CD8-positive, alpha-beta T cell (primary cell): ENCODE measurements at regions of chr10 and their contacts with region 1.

Region 1: DNA sequence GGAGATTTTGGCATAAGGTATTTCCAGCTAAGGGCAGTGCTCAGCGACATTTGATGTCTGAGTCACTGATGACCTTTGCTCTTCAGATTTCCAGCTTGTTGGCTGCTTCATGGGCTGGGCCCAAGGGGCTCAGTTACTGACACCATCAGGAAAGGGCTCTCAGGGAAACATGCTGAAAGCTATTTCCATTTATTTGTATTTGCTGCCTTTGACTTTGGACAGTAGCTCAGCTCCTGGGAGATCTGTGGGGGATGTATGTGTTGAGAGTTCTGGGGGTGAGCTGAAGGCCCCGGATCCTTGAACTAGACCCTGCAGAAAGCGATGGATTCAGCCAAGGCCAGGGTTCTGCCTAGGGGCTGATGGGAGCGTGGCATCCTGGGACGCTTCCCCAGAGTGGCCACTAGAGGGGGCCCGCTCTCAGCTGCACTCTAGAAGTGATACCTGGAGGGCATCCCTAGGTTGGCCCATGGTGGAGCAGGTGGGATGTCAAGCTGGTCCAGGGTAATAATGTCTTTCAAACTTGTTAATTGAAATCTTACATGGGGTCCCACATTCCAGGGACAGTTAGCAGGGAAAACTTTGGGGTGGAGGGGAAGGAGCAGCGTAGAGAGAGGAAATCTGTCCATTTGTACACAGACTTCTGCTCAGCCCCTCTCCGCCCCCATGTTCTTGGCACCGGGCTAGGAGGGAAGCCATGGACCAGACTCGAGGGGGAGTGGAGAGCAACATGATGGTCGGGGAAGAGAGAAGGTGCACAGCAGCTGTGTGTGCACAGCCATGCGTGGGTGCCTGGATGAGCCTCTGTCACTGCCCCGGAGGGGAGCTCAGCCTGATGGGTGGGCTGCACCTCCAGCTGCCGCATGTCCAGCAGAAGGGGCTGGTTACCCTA is 3.0 kb upstream of the BTBD16 start:
- DNase-seq: peak; percentile 10 to 63 (median 40)
- ATAC-seq: peak; percentile 61
- H3K4me3 ChIP-seq: no peak overlapping the region
- H3K4me3 Mint-ChIP-seq: no peak overlapping the region
- H3K27ac ChIP-seq: no peak overlapping the region
- H3K27ac Mint-ChIP-seq: no peak overlapping the region
- H3K4me1 ChIP-seq: no peaks in the 10 kb centered on the region
- H3K4me1 Mint-ChIP-seq: no peaks in the 10 kb centered on the region
- H3K27me3 ChIP-seq: peaks cover 0 to 2% of the 10 kb centered on the region in 2 experiments
- H3K27me3 Mint-ChIP-seq: peaks cover 26% of the 10 kb centered on the region
- CTCF ChIP-seq: peak; percentile 77

Region 2: GRCh38 chr10:122221958-122222357 is 46.1 kb before region 1 on chr10:
- CTCF ChIA-PET with region 1: no interaction called
- POLR2A ChIA-PET with region 1: no interaction called
- intact Hi-C with region 1: no loop called
- DNase-seq: no peak
- ATAC-seq: no peak
- H3K4me3 ChIP-seq: no peak overlapping the region
- H3K4me3 Mint-ChIP-seq: no peak overlapping the region
- H3K27ac ChIP-seq: no peak overlapping the region
- H3K27ac Mint-ChIP-seq: no peak overlapping the region
- H3K4me1 ChIP-seq: no peaks in the 10 kb centered on the region
- H3K4me1 Mint-ChIP-seq: no peaks in the 10 kb centered on the region
- H3K27me3 ChIP-seq: no peaks in the 10 kb centered on the region
- H3K27me3 Mint-ChIP-seq: peaks cover 14% of the 10 kb centered on the region
- CTCF ChIP-seq: no peak

Region 3: DNA sequence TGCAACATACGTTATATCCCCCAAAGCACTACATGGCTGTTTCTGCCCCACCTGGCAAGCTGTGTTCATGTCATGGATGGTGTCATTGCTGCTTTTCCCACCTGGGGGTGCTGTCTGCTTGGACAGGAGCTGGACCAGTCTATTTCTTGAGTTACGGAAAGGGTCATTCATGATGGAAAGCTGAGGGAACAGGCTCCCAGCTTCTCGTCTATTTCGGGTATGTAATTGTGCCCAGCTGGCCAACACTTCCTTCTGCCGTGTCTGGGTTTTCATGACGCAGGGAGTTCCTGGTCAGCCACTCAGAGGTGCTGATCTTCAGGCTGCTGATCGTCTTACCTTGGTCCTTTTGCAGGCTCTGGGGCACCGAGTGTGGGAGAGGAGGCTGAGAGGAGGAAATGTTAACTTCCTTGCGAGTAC is 11.6 kb after region 1 on chr10:
- CTCF ChIA-PET with region 1: interaction called, 17 read pairs
- POLR2A ChIA-PET with region 1: no interaction called
- intact Hi-C with region 1: no loop called
- DNase-seq: peak in 1 of 9 experiments; percentile 15
- ATAC-seq: no peak
- H3K4me3 ChIP-seq: no peak overlapping the region
- H3K4me3 Mint-ChIP-seq: no peak overlapping the region
- H3K27ac ChIP-seq: no peak overlapping the region
- H3K27ac Mint-ChIP-seq: no peak overlapping the region
- H3K4me1 ChIP-seq: no peaks in the 10 kb centered on the region
- H3K4me1 Mint-ChIP-seq: no peaks in the 10 kb centered on the region
- H3K27me3 ChIP-seq: no peaks in the 10 kb centered on the region
- H3K27me3 Mint-ChIP-seq: peaks cover 16% of the 10 kb centered on the region
- CTCF ChIP-seq: no peak

Region 4: DNA sequence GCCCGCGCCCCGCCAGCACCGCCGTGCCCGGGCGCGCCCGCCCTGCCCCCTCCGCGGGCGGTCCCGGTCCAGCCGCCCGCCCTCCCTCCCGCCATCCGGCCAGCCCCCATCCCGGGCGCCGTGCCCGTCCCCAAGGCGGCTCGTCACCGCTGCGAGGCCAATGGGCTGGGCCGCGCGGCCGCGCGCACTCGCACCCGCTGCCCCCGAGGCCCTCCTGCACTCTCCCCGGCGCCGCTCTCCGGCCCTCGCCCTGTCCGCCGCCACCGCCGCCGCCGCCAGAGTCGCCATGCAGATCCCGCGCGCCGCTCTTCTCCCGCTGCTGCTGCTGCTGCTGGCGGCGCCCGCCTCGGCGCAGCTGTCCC is 193.3 kb after region 1 on chr10 and contains the start of gene HTRA1:
- CTCF ChIA-PET with region 1: no interaction called
- POLR2A ChIA-PET with region 1: no interaction called
- intact Hi-C with region 1: no loop called
- DNase-seq: peak in 1 of 9 experiments; percentile 14
- ATAC-seq: no peak
- H3K4me3 ChIP-seq: peak within 1 kb of the TSS; percentile 38 to 58
- H3K4me3 Mint-ChIP-seq: peak within 1 kb of the TSS; percentile 77
- H3K27ac ChIP-seq: no peak within 1 kb of the TSS
- H3K27ac Mint-ChIP-seq: no peak within 1 kb of the TSS
- H3K4me1 ChIP-seq: peaks cover 17% of the 10 kb centered on the region
- H3K4me1 Mint-ChIP-seq: peaks cover 22% of the 10 kb centered on the region
- H3K27me3 ChIP-seq: peaks cover 15 to 21% of the 10 kb centered on the region in 2 experiments
- H3K27me3 Mint-ChIP-seq: peaks cover 59% of the 10 kb centered on the region
- CTCF ChIP-seq: no peak
- total RNA-seq, gene HTRA1: not detected

Region 5: GRCh38 chr10:122688293-122688994 is 420.4 kb after region 1 on chr10:
- CTCF ChIA-PET with region 1: no interaction called
- POLR2A ChIA-PET with region 1: no interaction called
- intact Hi-C with region 1: no loop called
- DNase-seq: no peak
- ATAC-seq: no peak
- H3K4me3 ChIP-seq: no peak overlapping the region
- H3K4me3 Mint-ChIP-seq: no peak overlapping the region
- H3K27ac ChIP-seq: no peak overlapping the region
- H3K27ac Mint-ChIP-seq: no peak overlapping the region
- H3K4me1 ChIP-seq: no peaks in the 10 kb centered on the region
- H3K4me1 Mint-ChIP-seq: no peaks in the 10 kb centered on the region
- H3K27me3 ChIP-seq: peaks cover 0 to 2% of the 10 kb centered on the region in 2 experiments
- H3K27me3 Mint-ChIP-seq: peaks cover 29% of the 10 kb centered on the region
- CTCF ChIP-seq: no peak